HepG2 (cell line): ENCODE measurements at regions of chr4 and their contacts with region 1.

Region 1: DNA sequence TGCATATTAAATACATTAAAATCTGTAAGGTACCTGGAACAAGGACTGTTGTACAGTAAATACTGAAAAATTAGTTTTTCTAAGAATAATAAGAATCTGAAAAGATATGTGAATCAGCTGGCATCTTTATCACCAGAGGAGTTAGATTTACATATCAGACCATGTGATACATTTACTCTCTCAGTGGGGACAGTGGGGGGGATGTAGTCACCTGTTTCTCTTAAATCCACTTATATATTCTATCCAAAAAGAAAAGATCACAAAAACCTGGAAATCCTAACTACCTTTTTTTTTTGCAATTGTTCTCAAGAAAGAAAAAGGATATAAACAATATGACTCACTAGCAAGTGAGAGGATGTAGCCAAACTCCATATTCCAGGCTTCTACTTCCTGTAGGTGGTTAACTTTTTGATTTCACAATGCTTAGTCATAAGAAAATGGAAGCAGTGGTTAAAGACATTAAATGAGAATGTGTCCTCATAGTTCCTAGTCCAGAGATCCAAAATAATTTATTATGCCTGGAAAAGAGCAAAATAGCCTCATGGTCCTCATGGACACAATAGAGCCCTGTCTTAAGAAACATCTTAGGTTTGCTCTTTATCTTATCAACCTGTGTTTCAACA is 22.5 kb upstream of the MYOZ2 start:
- DNase-seq: no peak
- ATAC-seq: no peak
- H3K4me3 ChIP-seq: no peak overlapping the region
- H3K27ac ChIP-seq: no peak overlapping the region
- H3K4me1 ChIP-seq: peaks cover 5% of the 10 kb centered on the region; the same call in 1 of the 2 replicates
- H3K27me3 ChIP-seq: no peaks in the 10 kb centered on the region
- CTCF ChIP-seq: no peak
- EP300 ChIP-seq: no peak
- POLR2A ChIP-seq: no peak
- RAD21 ChIP-seq: no peak

Region 2: DNA sequence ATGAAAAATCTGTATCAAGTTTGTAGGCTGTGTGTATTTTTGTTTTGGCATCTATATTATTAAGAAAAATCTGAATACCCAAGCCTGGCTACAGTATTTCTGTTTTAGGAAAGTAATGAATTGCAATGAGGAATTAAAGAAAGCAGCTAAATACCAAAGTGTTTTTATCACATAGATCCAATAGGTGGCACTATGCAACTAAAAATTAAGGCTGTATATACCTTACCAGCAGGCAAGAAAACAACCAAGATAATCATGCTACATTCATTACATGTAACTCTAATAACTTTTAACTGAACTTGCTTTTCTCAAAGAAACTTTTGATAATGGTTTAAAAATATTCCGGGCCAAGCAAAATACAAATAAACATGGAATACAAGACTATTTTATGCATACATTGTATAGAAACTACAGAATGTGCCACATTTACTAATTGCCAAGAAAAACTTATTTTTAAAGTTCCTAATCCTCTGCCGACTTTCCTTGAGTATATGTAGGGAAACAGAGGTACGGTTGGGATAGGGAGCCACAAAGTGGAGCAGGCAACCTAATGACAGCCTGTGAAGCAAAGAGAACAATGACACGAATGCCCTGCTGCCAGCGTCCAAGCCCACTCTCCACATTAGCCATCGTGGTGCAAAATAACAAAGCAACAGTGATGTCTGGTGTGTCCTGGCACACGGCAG is 340.9 kb before region 1 on chr4:
- CTCF ChIA-PET with region 1: no interaction called
- POLR2A ChIA-PET with region 1: no interaction called
- in situ Hi-C with region 1: no loop called
- intact Hi-C with region 1: no loop called
- DNase-seq: peak; percentile 18
- ATAC-seq: peak; percentile 83
- H3K4me3 ChIP-seq: no peak overlapping the region
- H3K27ac ChIP-seq: no peak overlapping the region
- H3K4me1 ChIP-seq: no peaks in the 10 kb centered on the region
- H3K27me3 ChIP-seq: no peaks in the 10 kb centered on the region
- CTCF ChIP-seq: peak; percentile 55
- EP300 ChIP-seq: no peak
- POLR2A ChIP-seq: no peak
- RAD21 ChIP-seq: no peak

Region 3: DNA sequence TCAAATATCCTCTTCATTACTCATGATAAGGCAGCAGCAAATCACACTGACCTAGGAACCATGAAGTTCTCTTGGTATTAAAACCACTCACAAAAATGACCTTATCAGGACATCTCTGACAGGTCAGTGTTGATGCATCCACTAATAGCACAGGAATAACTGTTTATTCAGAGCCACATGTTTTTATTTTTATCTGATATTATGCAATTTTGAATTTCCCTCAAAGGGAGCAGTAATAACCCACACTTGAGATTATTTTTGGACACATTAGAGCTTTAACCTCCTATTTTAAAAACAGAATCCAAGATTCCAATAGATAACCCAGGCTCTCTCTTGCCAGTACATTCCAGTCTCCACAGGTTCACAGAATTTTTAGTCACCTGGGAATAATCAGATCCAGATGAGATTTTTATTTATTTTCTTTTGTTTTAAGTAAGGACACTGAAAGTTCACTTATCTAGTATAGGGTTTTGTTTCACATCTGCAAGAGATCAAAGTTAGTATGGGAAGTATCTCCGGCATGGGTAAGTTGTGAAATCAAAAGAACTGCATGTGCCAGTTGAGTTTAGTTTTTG is 13.8 kb before region 1 on chr4:
- CTCF ChIA-PET with region 1: no interaction called
- POLR2A ChIA-PET with region 1: no interaction called
- in situ Hi-C with region 1: no loop called
- intact Hi-C with region 1: no loop called
- DNase-seq: no peak
- ATAC-seq: no peak
- H3K4me3 ChIP-seq: no peak overlapping the region
- H3K27ac ChIP-seq: no peak overlapping the region
- H3K4me1 ChIP-seq: peaks cover 13% of the 10 kb centered on the region
- H3K27me3 ChIP-seq: no peaks in the 10 kb centered on the region
- CTCF ChIP-seq: no peak
- EP300 ChIP-seq: no peak
- POLR2A ChIP-seq: no peak
- RAD21 ChIP-seq: no peak

Region 4: DNA sequence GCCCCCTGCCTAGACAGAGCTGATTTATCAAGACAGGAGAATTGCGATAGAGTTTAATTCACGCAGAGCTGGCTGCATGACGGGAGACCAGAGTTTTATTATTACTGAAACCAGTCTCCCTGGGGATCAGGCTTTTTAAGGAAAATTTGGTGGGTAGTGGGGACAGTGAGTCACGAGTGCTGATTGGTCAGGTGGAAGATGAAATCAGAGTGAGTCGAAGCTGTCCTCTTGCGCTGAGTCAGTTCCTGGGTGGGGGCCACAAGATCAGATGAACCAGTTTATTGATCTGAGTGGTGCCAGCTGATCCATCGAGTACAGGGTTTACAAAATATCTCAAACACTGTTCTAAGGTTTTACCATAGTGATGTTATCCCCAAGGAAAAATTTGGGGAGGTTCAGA is 59.1 kb after region 1 on chr4:
- CTCF ChIA-PET with region 1: no interaction called
- POLR2A ChIA-PET with region 1: no interaction called
- in situ Hi-C with region 1: no loop called
- intact Hi-C with region 1: loop called (anchors 2 kb)
- DNase-seq: no peak
- ATAC-seq: no peak
- H3K4me3 ChIP-seq: no peak overlapping the region
- H3K27ac ChIP-seq: no peak overlapping the region
- H3K4me1 ChIP-seq: no peaks in the 10 kb centered on the region
- H3K27me3 ChIP-seq: no peaks in the 10 kb centered on the region; a peak in 2 of 5 replicates
- CTCF ChIP-seq: no peak
- EP300 ChIP-seq: no peak
- POLR2A ChIP-seq: no peak
- RAD21 ChIP-seq: no peak